SK-N-SH (cell line): ENCODE measurements at regions of chr14 and their contacts with region 1.

Region 1: GRCh38 chr14:51507906-51508511 is 143.7 kb upstream of the FRMD6 start:
- DNase-seq: peak; percentile 68
- H3K4me3 ChIP-seq: no peak overlapping the region
- H3K27ac ChIP-seq: peak overlapping the region; percentile 93 to 95
- H3K4me1 ChIP-seq: peaks cover 21 to 32% of the 10 kb centered on the region in 2 experiments
- H3K27me3 ChIP-seq: no peaks in the 10 kb centered on the region
- CTCF ChIP-seq: 0 out of 2 replicates have a peak, but pooled peaks have one; percentile 10
- EP300 ChIP-seq: peak; percentile 61 to 90; a peak in 3 of 4 replicates
- RAD21 ChIP-seq: peak; percentile 21; the same call in 1 of the 2 replicates

Region 2: GRCh38 chr14:51651388-51652167 is 143.6 kb after region 1 on chr14 and contains the start of gene FRMD6:
- CTCF ChIA-PET with region 1: interaction called, 12 read pairs
- POLR2A ChIA-PET with region 1: no interaction called
- DNase-seq: peak; percentile 97
- H3K4me3 ChIP-seq: peak within 1 kb of the TSS; percentile 93 to 95
- H3K27ac ChIP-seq: peak within 1 kb of the TSS; percentile 96 to 97
- H3K4me1 ChIP-seq: peaks cover 0 to 23% of the 10 kb centered on the region in 2 experiments; a peak in 2 of 4 replicates
- H3K27me3 ChIP-seq: no peaks in the 10 kb centered on the region
- CTCF ChIP-seq: peak; percentile 79
- EP300 ChIP-seq: peak in 1 of 2 experiments; percentile 49; a peak in 2 of 4 replicates
- RAD21 ChIP-seq: peak; percentile 38
- polyA plus RNA-seq, gene FRMD6: 147 and 169 TPM in 2 replicates

Region 3: GRCh38 chr14:51691176-51691575 is 183.2 kb after region 1 on chr14:
- CTCF ChIA-PET with region 1: no interaction called
- POLR2A ChIA-PET with region 1: no interaction called
- DNase-seq: no peak
- H3K4me3 ChIP-seq: no peak overlapping the region
- H3K27ac ChIP-seq: peak overlapping the region in 1 of 2 experiments; percentile 49; a peak in 1 of 4 replicates
- H3K4me1 ChIP-seq: peaks cover 0 to 4% of the 10 kb centered on the region in 2 experiments; a peak in 2 of 4 replicates
- H3K27me3 ChIP-seq: no peaks in the 10 kb centered on the region
- CTCF ChIP-seq: no peak
- EP300 ChIP-seq: no peak
- RAD21 ChIP-seq: no peak